ENCODE measurements at regions of chr10 and their contacts with region 1.

Region 1: DNA sequence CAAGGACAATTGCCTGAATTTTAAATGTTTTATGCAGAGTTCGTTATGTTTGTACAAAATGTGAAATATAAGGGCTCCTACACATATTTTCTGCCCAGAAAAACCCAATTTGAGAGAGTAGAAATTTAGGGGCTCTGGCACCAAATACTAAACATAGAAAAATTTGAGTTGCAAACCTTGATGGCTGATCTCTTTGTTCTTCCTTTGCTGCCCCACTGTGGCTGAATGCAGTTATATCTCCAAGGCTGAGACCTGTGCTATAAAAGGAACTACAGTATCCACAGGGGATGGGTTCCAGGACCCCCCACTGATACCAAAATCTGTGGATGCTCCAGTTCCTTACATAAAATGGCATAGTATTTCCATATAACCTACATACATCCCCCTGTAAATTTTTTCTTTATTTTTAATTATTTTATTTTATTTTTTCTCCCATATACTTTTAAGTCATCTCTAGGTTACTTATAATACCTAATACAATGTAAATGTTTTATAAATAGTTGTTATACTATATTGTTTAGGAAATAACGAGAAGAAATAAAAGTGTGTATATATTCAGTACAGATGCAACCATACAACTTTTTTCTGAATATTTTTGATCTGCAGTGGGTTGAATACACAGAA is 22.5 kb downstream of the CFAP43 start:
- DNase-seq: peak; percentile 32
- H3K4me3 Mint-ChIP-seq: no peak overlapping the region
- H3K27ac Mint-ChIP-seq: no peak overlapping the region
- H3K4me1 Mint-ChIP-seq: no peaks in the 10 kb centered on the region
- H3K27me3 Mint-ChIP-seq: no peaks in the 10 kb centered on the region
- CTCF ChIP-seq: peak; percentile 26

Region 2: GRCh38 chr10:104045151-104046089 is 164.3 kb before region 1 on chr10:
- CTCF ChIA-PET with region 1: no interaction called
- intact Hi-C with region 1: loop called (anchors 1 kb)
- DNase-seq: peak; percentile 71
- H3K4me3 Mint-ChIP-seq: no peak overlapping the region
- H3K27ac Mint-ChIP-seq: no peak overlapping the region
- H3K4me1 Mint-ChIP-seq: no peaks in the 10 kb centered on the region
- H3K27me3 Mint-ChIP-seq: no peaks in the 10 kb centered on the region
- CTCF ChIP-seq: no peak

Region 3: GRCh38 chr10:104121520-104122224 is 88.0 kb before region 1 on chr10 and contains the start of gene SFR1:
- CTCF ChIA-PET with region 1: no interaction called
- intact Hi-C with region 1: loop called (anchors 5 kb)
- DNase-seq: peak; percentile 96
- H3K4me3 Mint-ChIP-seq: peak within 1 kb of the TSS; percentile 70
- H3K27ac Mint-ChIP-seq: peak within 1 kb of the TSS; percentile 94
- H3K4me1 Mint-ChIP-seq: peaks cover 26% of the 10 kb centered on the region
- H3K27me3 Mint-ChIP-seq: no peaks in the 10 kb centered on the region
- CTCF ChIP-seq: peak; percentile 38
- total RNA-seq, gene SFR1: 10.2 and 11.6 TPM in 2 replicates

Region 4: DNA sequence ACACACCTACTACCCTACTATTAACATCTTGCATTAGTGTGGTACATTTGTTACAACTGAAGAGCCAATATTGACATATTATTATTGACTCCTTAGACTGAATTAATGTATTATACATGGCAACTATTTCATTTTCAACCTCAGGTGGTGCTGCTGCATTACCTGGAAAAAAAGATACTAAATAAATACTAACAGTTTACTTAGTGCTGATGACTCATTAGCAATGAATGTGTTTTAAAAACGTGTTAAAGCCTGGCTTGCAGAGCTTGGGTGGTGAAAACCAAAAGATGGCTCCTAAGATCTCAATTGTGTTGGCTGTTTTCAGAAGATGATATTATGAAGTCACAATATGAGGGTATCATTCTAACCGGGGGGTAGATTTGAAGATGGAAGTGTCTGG is 12.3 kb before region 1 on chr10:
- CTCF ChIA-PET with region 1: no interaction called
- intact Hi-C with region 1: loop called (anchors 1 kb)
- DNase-seq: peak; percentile 4
- H3K4me3 Mint-ChIP-seq: no peak overlapping the region
- H3K27ac Mint-ChIP-seq: no peak overlapping the region
- H3K4me1 Mint-ChIP-seq: peaks cover 4% of the 10 kb centered on the region
- H3K27me3 Mint-ChIP-seq: no peaks in the 10 kb centered on the region
- CTCF ChIP-seq: no peak

Region 5: DNA sequence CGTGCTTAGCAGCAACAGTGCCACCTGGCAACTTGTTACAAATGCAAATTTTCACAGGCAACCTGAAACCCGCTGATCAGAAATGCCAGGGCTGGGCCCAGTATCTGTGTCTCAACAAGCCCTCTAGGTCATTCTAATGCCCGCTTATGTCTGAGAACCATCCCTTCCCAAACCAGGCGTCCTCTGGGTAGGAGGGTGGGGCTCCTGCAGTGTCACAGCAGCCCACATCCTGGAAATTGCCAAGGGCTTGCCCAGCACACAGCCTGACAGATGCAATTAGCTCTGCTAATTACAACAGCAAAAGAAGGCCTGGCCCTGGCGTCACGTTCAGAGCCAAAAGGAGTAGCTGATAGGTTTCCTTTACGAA is 112.7 kb after region 1 on chr10:
- CTCF ChIA-PET with region 1: no interaction called
- intact Hi-C with region 1: no loop called
- DNase-seq: no peak
- H3K4me3 Mint-ChIP-seq: no peak overlapping the region
- H3K27ac Mint-ChIP-seq: no peak overlapping the region
- H3K4me1 Mint-ChIP-seq: peaks cover 9% of the 10 kb centered on the region
- H3K27me3 Mint-ChIP-seq: peaks cover 20% of the 10 kb centered on the region
- CTCF ChIP-seq: no peak